PC-3 (cell line): ENCODE measurements at regions of chr1 and their contacts with region 1.

Region 1: DNA sequence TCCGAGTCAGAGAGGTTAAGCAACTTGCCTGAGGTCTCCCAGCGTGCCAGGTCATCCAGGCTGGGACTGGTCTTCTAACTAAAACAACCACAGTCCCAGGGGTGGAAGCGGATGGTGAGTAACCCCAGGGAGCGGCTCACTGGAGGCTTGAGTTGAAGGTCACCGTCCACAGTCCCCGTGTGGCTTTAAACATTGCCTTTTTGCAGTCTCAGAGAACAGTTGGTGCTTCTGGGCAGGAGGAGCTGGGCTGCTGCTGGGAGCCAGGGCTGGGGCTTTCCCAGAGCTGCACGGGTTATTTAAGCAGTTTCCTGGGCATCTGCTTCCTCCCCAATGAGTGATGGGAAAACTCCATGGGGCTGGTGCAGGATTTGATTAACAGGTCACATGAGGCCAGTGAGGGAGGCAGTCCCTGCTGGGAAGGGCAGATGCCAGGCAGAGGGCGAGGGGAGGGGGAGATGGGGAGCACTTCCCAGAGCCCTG is 12.3 kb downstream of the ARHGEF10L start:
- DNase-seq: peak; percentile 54
- ATAC-seq: peak; percentile 59
- H3K4me3 ChIP-seq: peak overlapping the region; percentile 15; the same call in 1 of the 2 replicates
- H3K27ac ChIP-seq: peak overlapping the region; percentile 81
- H3K4me1 ChIP-seq: peaks cover 45% of the 10 kb centered on the region
- H3K27me3 ChIP-seq: no peaks in the 10 kb centered on the region
- CTCF ChIP-seq: no peak

Region 2: DNA sequence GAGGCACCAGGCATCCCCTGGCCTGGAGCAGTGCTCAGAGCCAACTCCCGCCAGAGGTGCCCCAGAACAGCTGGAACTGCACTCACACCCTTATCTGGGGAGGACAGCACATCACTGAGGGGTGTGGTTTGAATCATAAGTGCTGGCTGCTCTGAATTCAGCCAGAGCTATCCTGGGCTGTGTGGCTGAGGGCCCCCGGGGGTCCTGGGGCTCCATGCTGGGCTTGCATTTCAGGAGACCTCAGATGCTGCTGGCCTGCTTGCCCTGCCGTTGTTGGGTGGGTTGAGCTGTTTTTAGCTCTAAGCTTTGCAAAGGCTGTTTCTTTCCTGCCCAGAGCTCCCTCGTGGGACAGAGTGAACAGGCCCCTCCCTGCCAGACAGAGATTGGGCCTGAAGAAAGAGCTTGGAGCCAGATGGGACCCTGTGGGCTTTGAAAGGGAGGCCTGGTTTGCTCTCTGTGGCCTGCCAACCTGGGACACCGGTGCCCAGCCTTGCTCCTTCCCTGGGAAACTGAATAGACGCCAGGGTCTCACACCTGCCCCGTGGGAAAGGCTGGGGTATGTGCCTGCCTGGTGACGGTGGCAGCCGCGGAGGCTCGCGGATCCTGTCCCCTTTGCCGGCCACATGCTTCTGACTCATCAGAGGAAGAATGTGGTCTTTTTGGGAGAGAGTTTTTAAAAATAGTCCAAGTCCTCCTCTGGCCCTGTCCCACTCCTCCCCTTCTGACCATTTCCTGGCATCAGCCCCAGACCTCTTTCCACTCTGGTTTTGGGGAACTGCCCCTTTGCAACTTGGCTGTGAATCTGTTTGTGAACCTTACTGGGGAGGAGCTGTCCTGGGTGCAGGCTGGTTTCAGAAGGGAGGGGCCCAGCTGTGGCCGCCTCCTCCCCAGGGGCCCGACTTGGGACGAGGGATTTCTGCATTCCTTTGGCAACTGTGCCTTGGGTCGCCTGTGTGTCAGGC is 17.7 kb after region 1 on chr1:
- CTCF ChIA-PET with region 1: no interaction called
- POLR2A ChIA-PET with region 1: interaction called, 11 read pairs
- intact Hi-C with region 1: no loop called
- DNase-seq: peak; percentile 86
- ATAC-seq: peak; percentile 76
- H3K4me3 ChIP-seq: no peak overlapping the region
- H3K27ac ChIP-seq: peak overlapping the region; percentile 97
- H3K4me1 ChIP-seq: peaks cover 19% of the 10 kb centered on the region
- H3K27me3 ChIP-seq: no peaks in the 10 kb centered on the region
- CTCF ChIP-seq: no peak

Region 3: DNA sequence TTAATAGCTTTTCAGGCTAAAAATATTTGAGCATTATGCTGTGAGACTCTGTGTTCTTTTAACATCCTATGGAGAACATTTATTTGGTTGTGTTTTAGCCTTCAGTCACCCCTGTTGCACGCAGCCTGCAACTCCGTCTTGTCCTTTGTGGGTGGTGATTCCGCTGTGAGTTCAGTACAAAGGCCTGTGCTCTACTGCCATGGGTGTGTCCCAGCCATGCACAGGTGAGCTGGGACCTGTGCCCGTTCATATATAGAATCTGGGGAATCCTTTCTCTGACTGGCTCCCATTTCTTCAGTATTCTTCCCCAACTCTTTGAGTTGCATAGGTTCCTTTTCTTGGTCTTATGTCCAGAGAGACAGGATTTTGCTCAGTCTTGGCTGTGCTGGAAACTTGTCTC is 264.7 kb after region 1 on chr1:
- CTCF ChIA-PET with region 1: no interaction called
- POLR2A ChIA-PET with region 1: no interaction called
- intact Hi-C with region 1: no loop called
- DNase-seq: no peak
- ATAC-seq: no peak
- H3K4me3 ChIP-seq: no peak overlapping the region
- H3K27ac ChIP-seq: no peak overlapping the region
- H3K4me1 ChIP-seq: no peaks in the 10 kb centered on the region
- H3K27me3 ChIP-seq: peaks cover 69% of the 10 kb centered on the region
- CTCF ChIP-seq: no peak

Region 4: GRCh38 chr1:17909634-17910033 is 357.8 kb after region 1 on chr1:
- CTCF ChIA-PET with region 1: no interaction called
- POLR2A ChIA-PET with region 1: no interaction called
- intact Hi-C with region 1: no loop called
- DNase-seq: peak; percentile 41
- ATAC-seq: no peak
- H3K4me3 ChIP-seq: no peak overlapping the region
- H3K27ac ChIP-seq: no peak overlapping the region
- H3K4me1 ChIP-seq: no peaks in the 10 kb centered on the region
- H3K27me3 ChIP-seq: peaks cover 79% of the 10 kb centered on the region
- CTCF ChIP-seq: peak; percentile 39

Region 5: DNA sequence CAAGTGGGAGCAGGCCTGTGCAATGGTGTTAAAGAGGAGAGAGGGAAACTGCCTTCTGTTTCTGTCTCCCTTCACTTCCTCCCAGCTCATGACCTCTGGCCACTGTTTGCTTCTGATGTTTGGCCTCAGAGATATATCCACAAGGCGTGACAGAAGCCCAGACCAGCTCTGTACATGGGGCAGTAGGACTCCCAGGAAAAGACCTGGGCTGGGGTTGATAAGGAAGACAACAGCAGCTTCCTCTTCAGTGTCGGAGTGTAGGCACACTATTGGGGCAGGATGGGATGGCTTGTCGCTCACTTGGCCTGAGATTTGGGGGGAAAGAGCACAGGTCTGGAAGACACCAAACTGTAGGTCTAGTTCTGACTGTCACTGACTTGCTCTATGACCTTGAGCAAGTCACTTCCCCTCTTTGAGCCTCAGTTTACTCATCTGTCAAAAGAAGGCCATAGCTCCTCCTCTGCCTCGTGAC is 861.1 kb after region 1 on chr1:
- CTCF ChIA-PET with region 1: no interaction called
- POLR2A ChIA-PET with region 1: interaction called, 16 read pairs
- intact Hi-C with region 1: no loop called
- DNase-seq: no peak
- ATAC-seq: no peak
- H3K4me3 ChIP-seq: no peak overlapping the region
- H3K27ac ChIP-seq: no peak overlapping the region
- H3K4me1 ChIP-seq: peaks cover 6% of the 10 kb centered on the region
- H3K27me3 ChIP-seq: no peaks in the 10 kb centered on the region
- CTCF ChIP-seq: no peak